Activated CD8-positive, alpha-beta T cell treated with anti-CD3 and anti-CD28 coated beads for 36 hours (primary cell): ENCODE measurements at regions of chr7 and their contacts with region 1.

Region 1: GRCh38 chr7:1175967-1176851 is 16.2 kb upstream of the ZFAND2A start:
- DNase-seq: peak; percentile 92
- ATAC-seq: peak; percentile 80
- H3K4me3 Mint-ChIP-seq: peak overlapping the region; percentile 60
- H3K27ac Mint-ChIP-seq: peak overlapping the region; percentile 88
- H3K4me1 Mint-ChIP-seq: peaks cover 15% of the 10 kb centered on the region
- H3K27me3 Mint-ChIP-seq: peaks cover 14% of the 10 kb centered on the region
- CTCF ChIP-seq: peak; percentile 94

Region 2: DNA sequence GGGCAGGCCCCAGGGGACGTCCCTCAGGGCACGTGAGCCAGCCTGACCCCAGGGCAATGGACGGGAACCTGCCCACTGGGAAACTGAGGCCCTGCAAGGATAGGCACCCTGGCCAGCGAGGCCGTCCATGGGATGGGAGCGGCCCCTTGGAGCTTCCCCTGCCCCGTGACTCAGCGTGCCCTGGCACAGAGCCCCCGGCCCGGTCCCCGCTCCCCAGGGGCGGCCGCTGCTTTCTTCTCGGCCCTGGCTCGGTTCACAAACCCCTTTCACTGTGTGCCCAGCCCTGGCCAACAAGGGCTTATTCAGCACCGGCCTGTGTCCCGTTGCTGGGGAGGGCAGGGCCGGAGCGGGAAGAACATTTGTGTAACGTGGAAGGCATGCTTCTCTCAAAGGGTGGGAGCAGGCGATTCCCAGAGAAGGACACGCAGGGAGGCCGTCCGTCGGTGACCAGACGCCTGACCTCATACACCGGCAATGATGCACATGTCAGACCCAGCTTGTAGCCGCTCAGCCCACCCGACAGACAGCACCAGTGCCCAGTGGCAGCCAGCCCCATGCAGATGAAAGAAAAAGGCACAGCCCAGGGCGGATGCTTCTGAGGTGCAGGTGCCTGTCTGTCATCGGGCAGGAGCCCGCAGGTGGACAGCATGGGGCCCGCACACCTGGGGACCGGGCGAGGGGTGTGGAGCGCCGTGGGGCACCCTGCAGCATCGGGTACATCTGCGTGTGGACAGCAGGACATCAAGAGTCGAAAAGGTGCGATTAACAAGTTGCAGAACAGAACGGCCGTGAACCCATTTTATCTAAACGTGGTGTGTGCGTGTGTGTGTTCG is 751.0 kb before region 1 on chr7:
- CTCF ChIA-PET with region 1: no interaction called
- POLR2A ChIA-PET with region 1: no interaction called
- intact Hi-C with region 1: no loop called
- DNase-seq: no peak
- ATAC-seq: no peak
- H3K4me3 Mint-ChIP-seq: no peak overlapping the region
- H3K27ac Mint-ChIP-seq: no peak overlapping the region
- H3K4me1 Mint-ChIP-seq: no peaks in the 10 kb centered on the region
- H3K27me3 Mint-ChIP-seq: no peaks in the 10 kb centered on the region
- CTCF ChIP-seq: no peak

Region 3: DNA sequence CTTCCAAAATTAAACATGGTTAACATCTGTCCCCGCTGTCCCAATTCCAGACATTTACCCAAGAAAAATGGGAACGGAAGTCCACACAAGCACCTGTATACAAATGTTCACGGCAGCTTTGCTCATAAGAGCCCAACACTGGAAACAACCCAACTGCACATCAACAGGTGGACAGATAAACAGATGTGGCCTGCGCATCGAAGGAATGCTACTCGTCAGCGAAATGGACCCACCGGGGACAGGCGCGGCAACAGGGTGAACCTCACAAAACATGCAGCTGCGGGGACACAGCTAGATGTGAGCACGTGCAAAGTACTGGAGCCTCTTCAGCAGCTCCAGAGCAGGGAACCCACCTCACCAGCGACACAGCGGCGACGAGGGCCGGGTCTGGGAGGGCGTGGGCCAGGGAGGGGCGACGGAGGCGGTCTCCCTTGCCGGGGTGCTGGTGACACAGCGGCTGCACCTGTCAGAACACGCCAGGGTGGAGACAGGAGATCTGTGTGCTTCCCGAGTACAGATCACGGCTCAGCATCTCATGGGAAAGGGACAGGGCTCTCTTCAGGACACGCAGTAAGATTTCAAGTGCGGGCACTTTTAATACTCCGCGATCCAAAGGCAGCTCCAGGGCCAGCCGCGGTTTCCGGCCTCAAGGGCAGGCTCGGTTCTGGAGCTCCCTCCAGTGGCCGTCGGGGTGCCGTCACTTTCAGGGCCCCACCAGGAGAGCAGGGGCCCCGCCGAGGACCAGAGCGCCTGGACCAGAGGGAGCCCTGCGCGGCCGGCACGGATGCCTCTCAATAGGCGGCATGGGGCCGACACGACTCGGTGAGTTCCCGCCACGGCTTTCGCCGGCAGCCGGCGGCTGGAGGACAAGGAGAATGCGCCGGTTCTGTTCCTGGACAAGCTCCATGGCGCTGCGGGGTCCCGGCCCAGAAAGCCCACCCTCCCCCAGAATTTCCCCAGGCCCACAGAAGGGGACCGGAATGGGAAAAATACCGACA is 110.6 kb before region 1 on chr7:
- CTCF ChIA-PET with region 1: interaction called, 10 read pairs
- POLR2A ChIA-PET with region 1: no interaction called
- intact Hi-C with region 1: no loop called
- DNase-seq: peak; percentile 89
- ATAC-seq: peak; percentile 98
- H3K4me3 Mint-ChIP-seq: no peak overlapping the region
- H3K27ac Mint-ChIP-seq: no peak overlapping the region
- H3K4me1 Mint-ChIP-seq: peaks cover 4% of the 10 kb centered on the region
- H3K27me3 Mint-ChIP-seq: no peaks in the 10 kb centered on the region
- CTCF ChIP-seq: peak; percentile 95

Region 4: GRCh38 chr7:1086588-1087464 is 89.4 kb before region 1 on chr7:
- CTCF ChIA-PET with region 1: interaction called, 8 read pairs
- POLR2A ChIA-PET with region 1: no interaction called
- intact Hi-C with region 1: loop called (anchors 2 kb)
- DNase-seq: peak; percentile 85
- ATAC-seq: peak; percentile 92
- H3K4me3 Mint-ChIP-seq: peak overlapping the region; percentile 58
- H3K27ac Mint-ChIP-seq: peak overlapping the region; percentile 46
- H3K4me1 Mint-ChIP-seq: peaks cover 16% of the 10 kb centered on the region
- H3K27me3 Mint-ChIP-seq: no peaks in the 10 kb centered on the region
- CTCF ChIP-seq: peak; percentile 99

Region 5: GRCh38 chr7:1112109-1112508 is 64.1 kb before region 1 on chr7:
- CTCF ChIA-PET with region 1: no interaction called
- POLR2A ChIA-PET with region 1: no interaction called
- intact Hi-C with region 1: no loop called
- DNase-seq: no peak
- ATAC-seq: no peak
- H3K4me3 Mint-ChIP-seq: no peak overlapping the region
- H3K27ac Mint-ChIP-seq: no peak overlapping the region
- H3K4me1 Mint-ChIP-seq: peaks cover 2% of the 10 kb centered on the region
- H3K27me3 Mint-ChIP-seq: no peaks in the 10 kb centered on the region
- CTCF ChIP-seq: no peak

Region 6: DNA sequence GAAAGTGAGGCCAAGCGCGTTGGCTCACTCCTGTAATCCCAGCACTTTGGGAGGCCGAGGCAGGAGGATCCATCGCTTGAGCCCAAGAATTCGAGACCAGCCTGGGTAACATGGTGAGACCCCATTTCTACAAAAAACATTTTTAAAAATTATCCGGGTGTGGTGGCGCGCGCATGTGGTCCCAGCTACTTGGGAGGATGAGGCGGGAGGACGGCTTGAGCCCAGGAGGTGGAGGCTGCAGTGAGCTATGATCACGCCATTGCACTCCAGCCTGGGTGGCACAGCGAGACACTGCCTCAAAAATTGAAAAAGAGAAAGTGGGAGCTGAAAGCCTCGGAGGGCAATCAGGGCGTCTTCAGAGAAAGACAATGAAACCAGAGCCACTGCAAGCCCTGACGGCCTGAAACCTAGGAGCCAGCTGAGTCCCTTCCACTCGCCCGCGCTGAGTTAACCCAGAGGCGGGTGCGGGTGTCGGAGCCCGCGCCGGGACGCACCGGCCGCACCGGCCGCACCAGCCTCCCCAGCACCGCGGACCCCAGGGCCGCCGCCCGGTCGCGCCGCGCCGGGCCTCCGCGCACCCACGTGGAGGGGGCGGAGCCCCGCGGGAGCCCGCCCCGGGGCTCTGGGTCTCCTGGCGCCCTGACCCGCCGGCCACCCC is 38.6 kb before region 1 on chr7:
- CTCF ChIA-PET with region 1: interaction called, 32 read pairs
- POLR2A ChIA-PET with region 1: interaction called, 3 read pairs
- intact Hi-C with region 1: no loop called
- DNase-seq: peak; percentile 27
- ATAC-seq: peak; percentile 66
- H3K4me3 Mint-ChIP-seq: peak overlapping the region; percentile 79
- H3K27ac Mint-ChIP-seq: peak overlapping the region; percentile 71
- H3K4me1 Mint-ChIP-seq: peaks cover 16% of the 10 kb centered on the region
- H3K27me3 Mint-ChIP-seq: no peaks in the 10 kb centered on the region
- CTCF ChIP-seq: peak; percentile 18

Region 7: GRCh38 chr7:1159891-1160668 is 16.1 kb before region 1 on chr7 and contains the start of gene ZFAND2A:
- CTCF ChIA-PET with region 1: interaction called, 22 read pairs
- POLR2A ChIA-PET with region 1: interaction called, 5 read pairs
- intact Hi-C with region 1: no loop called
- DNase-seq: peak; percentile 99
- ATAC-seq: peak; percentile 98
- H3K4me3 Mint-ChIP-seq: peak within 1 kb of the TSS; percentile 87
- H3K27ac Mint-ChIP-seq: peak within 1 kb of the TSS; percentile 89
- H3K4me1 Mint-ChIP-seq: peaks cover 24% of the 10 kb centered on the region
- H3K27me3 Mint-ChIP-seq: no peaks in the 10 kb centered on the region
- CTCF ChIP-seq: no peak
- total RNA-seq, gene ZFAND2A: 22.1 to 23.5 TPM

Region 8: DNA sequence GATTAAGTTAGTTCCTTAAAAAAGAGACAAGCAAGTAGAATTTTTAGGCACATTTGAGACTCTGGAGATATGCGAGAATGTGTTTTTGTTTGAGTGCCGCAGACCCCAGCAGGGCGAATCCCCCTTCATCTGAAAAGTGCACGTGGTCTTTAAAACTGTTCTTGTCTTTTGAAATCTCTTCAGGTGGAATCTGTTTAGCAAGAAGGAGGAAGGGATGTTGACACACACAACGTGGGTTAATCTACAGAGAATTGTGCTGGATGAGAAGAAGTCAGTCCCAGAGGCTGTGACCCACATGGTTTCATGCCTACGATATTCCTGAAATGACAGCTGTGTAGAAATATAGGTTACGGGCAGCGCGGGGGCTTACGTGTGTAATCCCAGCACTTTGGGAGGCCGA is 10.9 kb after region 1 on chr7:
- CTCF ChIA-PET with region 1: interaction called, 37 read pairs
- POLR2A ChIA-PET with region 1: interaction called, 4 read pairs
- intact Hi-C with region 1: no loop called
- DNase-seq: no peak
- ATAC-seq: no peak
- H3K4me3 Mint-ChIP-seq: no peak overlapping the region
- H3K27ac Mint-ChIP-seq: no peak overlapping the region
- H3K4me1 Mint-ChIP-seq: peaks cover 5% of the 10 kb centered on the region
- H3K27me3 Mint-ChIP-seq: peaks cover 19% of the 10 kb centered on the region
- CTCF ChIP-seq: no peak

Region 9: DNA sequence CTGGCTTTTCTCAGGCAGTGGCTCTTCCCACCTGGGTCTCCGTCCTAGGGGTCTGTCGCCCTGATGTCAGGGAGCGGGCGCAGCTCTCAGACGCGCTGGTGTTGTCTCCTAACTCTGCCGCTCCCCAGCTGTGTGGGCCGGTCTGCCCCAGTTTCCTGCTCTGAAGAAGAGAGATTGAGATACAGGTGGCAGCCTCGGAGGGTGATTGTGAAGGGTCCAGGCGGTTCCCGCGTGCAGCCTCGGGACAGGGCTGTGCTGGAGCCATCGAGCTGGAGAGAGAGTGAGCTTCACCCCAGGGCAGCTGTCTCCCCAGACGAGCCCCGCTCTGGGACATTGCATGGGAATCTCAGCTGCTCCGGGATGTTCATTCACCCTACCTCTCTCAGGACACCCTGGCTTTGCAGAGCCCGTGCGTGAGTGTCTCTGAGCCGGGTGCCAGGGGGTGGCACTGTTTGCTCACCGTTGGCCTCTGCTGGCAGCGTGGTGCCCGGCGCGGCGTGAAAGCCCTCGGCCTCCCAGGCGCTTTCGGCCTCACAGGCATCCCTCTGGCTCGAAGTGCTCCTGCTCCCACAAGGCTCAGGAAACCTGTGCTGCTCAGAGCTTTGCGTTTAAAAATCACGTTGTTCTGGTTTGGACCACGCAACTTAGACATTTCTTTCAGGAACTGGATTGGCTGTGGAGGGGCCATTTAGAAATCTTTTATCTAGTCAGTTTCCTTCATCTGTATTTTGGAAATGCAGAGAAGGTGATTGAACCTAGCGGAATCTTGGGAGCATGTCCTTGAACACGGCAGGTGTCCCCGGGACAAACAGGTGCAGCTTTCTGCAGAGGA is 17.6 kb after region 1 on chr7:
- CTCF ChIA-PET with region 1: interaction called, 37 read pairs
- POLR2A ChIA-PET with region 1: interaction called, 4 read pairs
- intact Hi-C with region 1: no loop called
- DNase-seq: peak; percentile 62
- ATAC-seq: peak; percentile 54
- H3K4me3 Mint-ChIP-seq: no peak overlapping the region
- H3K27ac Mint-ChIP-seq: no peak overlapping the region
- H3K4me1 Mint-ChIP-seq: peaks cover 10% of the 10 kb centered on the region
- H3K27me3 Mint-ChIP-seq: peaks cover 16% of the 10 kb centered on the region
- CTCF ChIP-seq: peak; percentile 23